HEK293 (cell line): ENCODE measurements at regions of chr22 and their contacts with region 1.

Region 1: GRCh38 chr22:43273902-43274484 is 69.2 kb downstream of the SCUBE1 start:
- H3K4me3 ChIP-seq: no peak overlapping the region
- H3K27ac ChIP-seq: no peak overlapping the region
- H3K4me1 ChIP-seq: peaks cover 13% of the 10 kb centered on the region
- CTCF ChIP-seq: peak; percentile 78

Region 2: GRCh38 chr22:43203471-43203981 is 70.5 kb before region 1 on chr22:
- CTCF ChIA-PET with region 1: no interaction called
- POLR2A ChIA-PET with region 1: no interaction called
- H3K4me3 ChIP-seq: no peak overlapping the region
- H3K27ac ChIP-seq: no peak overlapping the region
- H3K4me1 ChIP-seq: no peaks in the 10 kb centered on the region
- CTCF ChIP-seq: no peak

Region 3: GRCh38 chr22:43230971-43231723 is 42.8 kb before region 1 on chr22:
- CTCF ChIA-PET with region 1: interaction called, 33 read pairs
- POLR2A ChIA-PET with region 1: no interaction called
- H3K4me3 ChIP-seq: no peak overlapping the region
- H3K27ac ChIP-seq: no peak overlapping the region
- H3K4me1 ChIP-seq: no peaks in the 10 kb centered on the region
- CTCF ChIP-seq: peak; percentile 94

Region 4: GRCh38 chr22:43288807-43289420 is 14.9 kb after region 1 on chr22:
- CTCF ChIA-PET with region 1: interaction called, 56 read pairs
- POLR2A ChIA-PET with region 1: no interaction called
- H3K4me3 ChIP-seq: no peak overlapping the region
- H3K27ac ChIP-seq: no peak overlapping the region
- H3K4me1 ChIP-seq: peaks cover 7% of the 10 kb centered on the region
- CTCF ChIP-seq: no peak

Region 5: GRCh38 chr22:43337385-43337784 is 63.4 kb after region 1 on chr22:
- CTCF ChIA-PET with region 1: interaction called, 318 read pairs
- POLR2A ChIA-PET with region 1: interaction called, 3 read pairs
- H3K4me3 ChIP-seq: no peak overlapping the region
- H3K27ac ChIP-seq: no peak overlapping the region
- H3K4me1 ChIP-seq: no peaks in the 10 kb centered on the region
- CTCF ChIP-seq: no peak

Region 6: GRCh38 chr22:43377896-43378704 is 104.1 kb after region 1 on chr22:
- CTCF ChIA-PET with region 1: interaction called, 131 read pairs
- POLR2A ChIA-PET with region 1: no interaction called
- H3K4me3 ChIP-seq: no peak overlapping the region
- H3K27ac ChIP-seq: no peak overlapping the region
- H3K4me1 ChIP-seq: peaks cover 5% of the 10 kb centered on the region; the same call in 1 of the 2 replicates
- CTCF ChIP-seq: no peak